ENCODE measurements at regions of chr3 and their contacts with region 1.

Region 1: GRCh38 chr3:23877329-23877980 is 39.3 kb downstream of the NKIRAS1 start:
- DNase-seq: peak; percentile 21
- H3K4me3 ChIP-seq: no peak overlapping the region
- H3K27ac ChIP-seq: no peak overlapping the region
- H3K4me1 ChIP-seq: peaks cover 43% of the 10 kb centered on the region
- H3K27me3 ChIP-seq: no peaks in the 10 kb centered on the region
- CTCF ChIP-seq: no peak
- POLR2A ChIP-seq: no peak

Region 2: GRCh38 chr3:23183734-23184133 is 693.7 kb before region 1 on chr3:
- CTCF ChIA-PET with region 1: no interaction called
- POLR2A ChIA-PET with region 1: no interaction called
- dilution Hi-C with region 1: no loop called
- intact Hi-C with region 1: loop called (anchors 5 kb)
- DNase-seq: peak; percentile 56
- H3K4me3 ChIP-seq: no peak overlapping the region
- H3K27ac ChIP-seq: no peak overlapping the region
- H3K4me1 ChIP-seq: no peaks in the 10 kb centered on the region
- H3K27me3 ChIP-seq: peaks cover 0 to 5% of the 10 kb centered on the region in 2 experiments
- CTCF ChIP-seq: peak; percentile 35 to 50
- POLR2A ChIP-seq: no peak

Region 3: DNA sequence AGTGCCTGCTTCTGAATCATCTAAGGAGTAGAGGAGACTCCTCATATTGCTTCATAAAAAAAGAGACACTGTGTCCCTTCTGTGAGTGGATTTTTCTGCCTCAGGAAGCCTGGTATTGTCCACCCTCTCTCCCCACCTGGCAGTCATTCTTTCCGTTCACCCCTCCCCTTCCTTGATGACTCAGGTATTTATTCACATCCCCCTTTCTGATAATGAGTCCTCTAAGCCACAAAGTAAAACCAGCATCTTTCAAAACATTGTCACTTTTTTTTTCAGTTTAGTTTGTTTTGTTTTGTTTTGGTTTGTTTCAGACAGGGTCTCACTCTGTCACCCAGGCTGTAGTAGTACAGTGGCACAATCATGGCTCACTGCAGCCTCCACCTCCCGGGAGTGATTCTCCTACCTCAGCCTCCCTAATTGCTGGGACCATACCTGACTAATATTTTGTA is 136.9 kb before region 1 on chr3:
- CTCF ChIA-PET with region 1: no interaction called
- POLR2A ChIA-PET with region 1: no interaction called
- dilution Hi-C with region 1: no loop called
- intact Hi-C with region 1: loop called (anchors 5 kb)
- DNase-seq: peak; percentile 93
- H3K4me3 ChIP-seq: peak overlapping the region in 1 of 3 experiments; percentile 23
- H3K27ac ChIP-seq: peak overlapping the region; percentile 66
- H3K4me1 ChIP-seq: peaks cover 38% of the 10 kb centered on the region
- H3K27me3 ChIP-seq: no peaks in the 10 kb centered on the region
- CTCF ChIP-seq: no peak
- POLR2A ChIP-seq: peak; percentile 21

Region 4: GRCh38 chr3:23834082-23834870 is 43.2 kb before region 1 on chr3:
- CTCF ChIA-PET with region 1: interaction called, 13 read pairs
- POLR2A ChIA-PET with region 1: no interaction called
- dilution Hi-C with region 1: no loop called
- intact Hi-C with region 1: no loop called
- DNase-seq: peak; percentile 45
- H3K4me3 ChIP-seq: no peak overlapping the region
- H3K27ac ChIP-seq: no peak overlapping the region
- H3K4me1 ChIP-seq: no peaks in the 10 kb centered on the region
- H3K27me3 ChIP-seq: no peaks in the 10 kb centered on the region
- CTCF ChIP-seq: no peak
- POLR2A ChIP-seq: no peak

Region 5: DNA sequence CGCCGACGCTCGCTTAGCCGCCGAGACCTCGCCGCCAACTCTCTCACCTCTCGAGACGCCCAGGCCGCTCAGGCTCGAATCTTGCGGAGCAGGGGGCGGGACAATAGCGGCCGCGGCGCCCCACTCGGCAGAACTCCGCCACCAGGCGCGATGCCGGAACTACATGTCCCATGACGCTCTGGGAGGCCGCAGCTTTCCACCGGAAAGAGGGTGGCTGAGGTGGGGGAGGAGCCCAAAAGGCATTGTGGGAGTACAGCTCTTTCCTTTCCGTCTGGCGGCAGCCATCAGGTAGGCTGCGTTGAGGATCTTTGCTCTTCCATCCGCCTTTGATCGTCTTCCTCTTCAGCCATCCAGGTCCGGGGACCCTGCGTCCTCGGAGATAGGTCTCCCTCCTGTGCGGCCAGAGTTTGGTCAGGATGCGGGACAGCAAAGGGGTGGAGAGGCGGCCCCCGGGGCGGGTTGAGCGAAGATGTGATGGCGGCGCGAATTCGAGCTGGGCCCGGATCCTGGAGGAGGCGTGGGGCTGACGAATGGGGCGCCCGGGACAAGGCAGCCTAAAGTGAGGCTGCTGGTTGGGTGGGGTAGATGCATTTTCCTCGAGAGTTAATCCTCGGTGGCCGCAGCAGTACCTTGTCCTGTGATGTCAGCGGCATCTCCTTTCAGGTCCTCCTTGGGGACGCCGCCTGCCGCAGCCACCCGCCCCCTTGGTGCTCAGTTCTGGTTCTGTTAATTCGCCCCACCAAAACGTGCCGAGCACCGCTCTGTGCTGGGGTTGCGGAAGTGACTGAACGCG is 39.6 kb after region 1 on chr3 and contains the starts of genes NKIRAS1 and RPL15:
- CTCF ChIA-PET with region 1: no interaction called
- POLR2A ChIA-PET with region 1: interaction called, 6 read pairs
- dilution Hi-C with region 1: no loop called
- intact Hi-C with region 1: loop called (anchors 2 kb)
- DNase-seq: peak; percentile 97
- H3K4me3 ChIP-seq: peak within 1 kb of the TSS; percentile 93 to 100 (median 98)
- H3K27ac ChIP-seq: peak within 1 kb of the TSS; percentile 79
- H3K4me1 ChIP-seq: peaks cover 17% of the 10 kb centered on the region
- H3K27me3 ChIP-seq: no peaks in the 10 kb centered on the region
- CTCF ChIP-seq: peak in 1 of 2 donors; percentile 43
- POLR2A ChIP-seq: peak; percentile 99
- total RNA-seq, gene NKIRAS1: 2.8 and 2.9 TPM in 2 replicates
- total RNA-seq, gene RPL15: 1,872 and 1,901 TPM in 2 replicates

Measured in endothelial cell of umbilical vein (primary cell).